Heart right ventricle (tissue), 16 donors: ENCODE measurements at regions of chr12 and their contacts with region 1.

Region 1: DNA sequence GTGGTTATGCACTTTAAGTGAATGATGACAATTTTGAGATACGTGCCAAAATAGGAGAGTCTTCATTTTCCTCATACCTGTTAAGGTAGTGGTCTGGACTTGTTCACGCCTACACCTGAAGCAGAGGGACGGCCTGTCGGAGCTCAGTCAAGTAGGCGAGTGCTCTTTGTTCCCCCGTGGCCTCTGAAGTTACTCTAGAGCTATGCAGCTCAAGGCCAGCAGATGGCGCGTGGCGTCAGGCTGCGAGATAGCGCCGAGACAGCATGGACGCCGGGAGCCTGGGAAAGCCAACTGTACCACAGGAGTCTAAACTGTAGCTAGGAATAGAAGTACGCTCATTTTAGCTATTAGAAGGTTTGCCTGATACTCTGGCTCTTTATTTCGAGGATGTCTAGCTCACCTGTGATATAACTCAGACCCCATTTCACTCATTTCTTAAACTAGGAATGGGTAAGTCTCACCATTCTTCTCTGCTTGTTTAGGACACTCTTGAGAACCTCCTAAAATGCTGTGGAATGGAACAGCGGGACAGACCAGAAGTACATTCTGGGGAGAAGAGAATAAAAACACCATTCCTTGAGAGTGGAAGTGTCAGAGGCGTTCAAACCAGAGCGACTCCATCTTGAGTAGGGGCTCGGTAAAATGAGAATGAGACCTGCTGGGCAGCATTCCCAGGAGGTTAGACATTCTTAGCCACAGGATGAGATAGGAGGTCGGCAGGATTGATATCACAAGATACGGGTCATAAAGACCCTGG is 267.4 kb upstream of the HMGA2 start:
- DNase-seq: peak; percentile 76 to 79
- ATAC-seq: peak; percentile 90 to 99 (median 97)
- H3K4me3 ChIP-seq: no peak overlapping the region
- H3K27ac ChIP-seq: no peak overlapping the region
- H3K4me1 ChIP-seq: peaks cover 0 to 8% (median 0%) of the 10 kb centered on the region in 9 donors
- H3K27me3 ChIP-seq: peaks cover 0 to 26% (median 0%) of the 10 kb centered on the region in 7 donors
- CTCF ChIP-seq: peak; percentile 82 to 95 (median 93)

Region 2: GRCh38 chr12:65602610-65603295 is 45.9 kb after region 1 on chr12:
- intact Hi-C with region 1: loop called in 3 of 10 experiments (anchors 5 kb)
- DNase-seq: peak; percentile 53 to 81
- ATAC-seq: peak; percentile 94 to 99 (median 96)
- H3K4me3 ChIP-seq: peak overlapping the region in 7 of 10 donors; percentile 2 to 46 (median 26)
- H3K27ac ChIP-seq: peak overlapping the region in 8 of 10 donors; percentile 17 to 70 (median 54)
- H3K4me1 ChIP-seq: peaks cover 0 to 32% (median 15%) of the 10 kb centered on the region in 9 donors
- H3K27me3 ChIP-seq: peaks cover 0 to 33% (median 0%) of the 10 kb centered on the region in 7 donors
- CTCF ChIP-seq: peak; percentile 53 to 85 (median 69)

Region 3: DNA sequence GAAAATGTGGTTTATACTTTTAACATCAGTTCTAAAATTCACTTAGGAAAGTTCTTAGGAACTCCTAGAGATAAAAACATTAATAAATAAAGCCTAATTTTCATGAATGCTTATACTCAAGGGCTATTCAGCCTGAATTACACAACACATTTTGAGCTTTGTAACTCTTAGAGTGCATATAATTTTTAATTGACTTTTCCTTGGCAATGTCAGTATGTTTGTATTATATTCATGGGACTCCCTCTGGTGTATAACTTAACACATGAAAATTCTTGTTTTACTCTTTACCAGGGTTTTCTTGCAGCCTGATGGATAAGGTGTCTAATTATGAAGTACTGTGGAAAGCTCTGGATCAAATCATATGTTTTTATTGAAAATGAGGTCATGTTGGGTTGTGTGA is 116.9 kb after region 1 on chr12:
- intact Hi-C with region 1: loop called in 2 of 10 experiments (anchors 5 to 10 kb)
- DNase-seq: no peak
- ATAC-seq: peak in 1 of 8 donors; percentile 34
- H3K4me3 ChIP-seq: no peak overlapping the region
- H3K27ac ChIP-seq: no peak overlapping the region
- H3K4me1 ChIP-seq: no peaks in the 10 kb centered on the region
- H3K27me3 ChIP-seq: peaks cover 0 to 5% (median 0%) of the 10 kb centered on the region in 7 donors
- CTCF ChIP-seq: peak in 6 of 9 donors; percentile 16 to 46 (median 32)

Region 4: DNA sequence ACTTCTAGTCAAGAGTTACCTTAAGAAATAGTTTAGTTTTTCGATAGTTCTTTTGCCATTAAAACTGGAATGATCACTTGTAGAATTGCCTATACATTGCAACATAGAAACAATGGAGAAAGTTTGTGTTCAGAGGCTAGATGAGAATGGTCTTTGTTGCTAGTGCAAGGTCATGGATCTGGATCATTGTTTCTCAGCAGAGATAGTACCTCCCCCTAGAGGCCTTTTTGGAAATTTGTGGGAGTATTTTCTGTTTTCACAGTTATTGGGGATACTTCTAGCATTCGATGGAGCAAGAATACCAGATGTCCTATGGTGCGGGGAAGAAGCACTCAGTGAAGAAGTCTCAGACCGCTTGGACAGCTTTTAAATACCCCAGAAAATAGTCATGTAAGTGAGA is 128.7 kb after region 1 on chr12:
- intact Hi-C with region 1: loop called in 4 of 10 experiments (anchors 1 to 10 kb)
- DNase-seq: no peak
- ATAC-seq: no peak
- H3K4me3 ChIP-seq: no peak overlapping the region
- H3K27ac ChIP-seq: no peak overlapping the region
- H3K4me1 ChIP-seq: no peaks in the 10 kb centered on the region
- H3K27me3 ChIP-seq: no peaks in the 10 kb centered on the region
- CTCF ChIP-seq: peak in 8 of 9 donors; percentile 19 to 61 (median 48)

Region 5: DNA sequence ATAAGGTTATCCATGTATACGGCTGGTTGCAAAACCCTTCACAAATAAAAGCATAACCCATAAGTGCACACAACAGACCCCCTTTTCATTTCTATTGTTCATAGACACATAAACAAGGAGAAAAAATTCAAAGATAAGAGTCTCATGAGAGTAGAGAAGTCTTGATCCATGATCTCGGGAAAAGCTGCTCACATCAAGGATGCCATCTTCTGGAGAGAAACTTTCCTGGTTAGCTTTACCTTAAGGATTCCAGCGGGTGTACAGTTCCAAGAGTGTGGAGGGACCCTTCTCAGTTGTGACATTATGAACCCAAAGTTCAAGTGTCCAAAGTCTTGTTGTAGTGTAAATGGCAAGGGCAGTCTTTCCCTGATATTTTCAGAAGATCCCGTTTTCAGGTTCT is 429.2 kb after region 1 on chr12:
- intact Hi-C with region 1: loop called in 2 of 10 experiments (anchors 5 to 10 kb)
- DNase-seq: no peak
- ATAC-seq: no peak
- H3K4me3 ChIP-seq: no peak overlapping the region
- H3K27ac ChIP-seq: no peak overlapping the region
- H3K4me1 ChIP-seq: no peaks in the 10 kb centered on the region
- H3K27me3 ChIP-seq: peaks cover 0 to 8% (median 0%) of the 10 kb centered on the region in 7 donors
- CTCF ChIP-seq: peak in 2 of 9 donors; percentile 7 to 25

Region 6: DNA sequence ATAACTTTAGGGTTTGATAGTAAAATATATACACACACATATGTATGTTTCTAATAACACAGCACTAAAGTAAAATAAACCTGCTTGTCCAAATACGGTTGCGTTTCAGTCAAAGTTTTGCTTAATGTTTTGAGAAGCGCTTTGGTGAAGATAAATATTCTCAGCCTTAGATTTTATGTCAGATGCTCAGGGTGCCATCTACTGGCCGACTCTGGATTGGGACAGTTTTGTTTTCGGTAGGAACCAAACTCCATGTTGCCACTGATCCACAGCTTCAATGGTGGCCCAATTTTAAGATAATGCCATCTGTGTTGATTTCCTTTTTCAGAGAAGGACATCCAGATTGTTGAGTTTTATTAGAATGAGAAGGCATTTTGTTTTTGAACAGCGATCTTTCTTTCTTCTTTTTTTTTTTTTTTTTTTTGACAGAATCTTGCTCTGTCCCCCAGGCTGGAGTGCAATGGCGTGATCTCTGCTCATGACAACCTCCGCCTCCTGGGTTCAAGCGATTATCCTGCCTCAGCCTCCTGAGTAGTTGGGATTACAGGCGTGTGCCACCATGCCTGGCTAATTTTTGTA is 530.6 kb after region 1 on chr12:
- intact Hi-C with region 1: loop called in 9 of 10 experiments (anchors 2 to 5 kb)
- DNase-seq: peak; percentile 21 to 66
- ATAC-seq: peak in 4 of 8 donors; percentile 46 to 57 (median 51)
- H3K4me3 ChIP-seq: no peak overlapping the region
- H3K27ac ChIP-seq: no peak overlapping the region
- H3K4me1 ChIP-seq: peaks cover 0 to 5% (median 0%) of the 10 kb centered on the region in 9 donors
- H3K27me3 ChIP-seq: peaks cover 0 to 8% (median 0%) of the 10 kb centered on the region in 7 donors
- CTCF ChIP-seq: peak; percentile 45 to 86 (median 80)

Region 7: GRCh38 chr12:66107451-66107915 is 550.6 kb after region 1 on chr12:
- intact Hi-C with region 1: loop called in 1 of 10 experiments (anchors 5 kb)
- DNase-seq: peak in 1 of 2 donors; percentile 76
- ATAC-seq: peak; percentile 53 to 86 (median 74)
- H3K4me3 ChIP-seq: no peak overlapping the region
- H3K27ac ChIP-seq: no peak overlapping the region
- H3K4me1 ChIP-seq: peaks cover 0 to 7% (median 0%) of the 10 kb centered on the region in 9 donors
- H3K27me3 ChIP-seq: no peaks in the 10 kb centered on the region
- CTCF ChIP-seq: peak; percentile 69 to 89 (median 79)